ENCODE measurements at regions of chr6 and their contacts with region 1.

Region 1: DNA sequence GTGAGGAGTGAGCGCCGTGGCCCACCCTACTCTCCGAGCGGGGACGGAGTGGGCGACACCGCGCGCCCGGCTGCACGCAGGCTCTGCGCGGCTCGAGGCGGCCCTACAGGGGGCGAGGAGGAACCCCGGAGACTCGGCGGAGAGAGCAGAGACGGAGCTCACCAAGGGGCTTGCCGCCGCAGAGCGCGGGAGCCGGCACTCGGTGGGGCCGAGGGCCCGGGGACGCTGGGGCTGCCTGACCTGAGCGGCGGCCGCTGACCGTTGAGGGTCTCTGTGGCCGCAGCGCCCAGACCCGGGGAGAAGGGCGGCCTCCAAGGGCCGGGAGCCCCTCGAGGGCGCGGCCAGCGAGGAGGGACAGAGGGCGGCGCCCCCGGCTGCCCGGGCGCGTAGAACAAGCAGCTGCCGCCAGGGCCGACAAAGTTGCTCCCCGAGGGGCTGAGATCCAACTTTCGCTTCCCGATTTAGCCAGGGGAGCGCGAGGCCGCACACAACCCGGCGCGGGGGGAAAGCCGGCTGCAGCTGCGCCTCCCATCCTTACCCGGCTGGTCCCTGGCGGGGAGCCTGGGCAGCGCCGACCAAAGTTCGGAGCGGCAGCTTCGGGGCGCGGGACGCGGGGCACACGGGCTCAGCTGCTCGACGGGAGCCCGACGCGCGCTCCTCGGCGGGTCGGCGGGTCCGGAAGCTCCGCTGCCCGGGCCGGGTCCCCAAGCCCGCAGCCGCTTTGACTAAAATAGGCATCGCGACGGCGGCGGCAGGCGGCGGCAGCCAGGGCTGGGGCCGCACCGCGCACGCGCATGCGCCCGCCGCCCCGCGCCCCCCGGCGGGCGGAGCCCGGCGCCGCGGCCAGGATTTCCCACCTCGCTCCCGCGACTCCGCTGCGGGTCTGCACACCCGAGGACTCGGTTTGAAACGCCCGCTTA is 43.1 kb downstream of the POPDC3 start:
- DNase-seq: peak; percentile 70 to 91
- ATAC-seq: peak; percentile 70 to 81
- H3K4me3 ChIP-seq: peak overlapping the region; percentile 81 to 86 (median 84)
- H3K27ac ChIP-seq: peak overlapping the region; percentile 95 to 97 (median 96)
- H3K4me1 ChIP-seq: peaks cover 22 to 33% of the 10 kb centered on the region in 2 donors
- H3K27me3 ChIP-seq: no peaks in the 10 kb centered on the region
- CTCF ChIP-seq: peak in 4 of 5 experiments; percentile 31 to 49 (median 40)
- POLR2A ChIP-seq: peak; percentile 85 to 92

Region 2: DNA sequence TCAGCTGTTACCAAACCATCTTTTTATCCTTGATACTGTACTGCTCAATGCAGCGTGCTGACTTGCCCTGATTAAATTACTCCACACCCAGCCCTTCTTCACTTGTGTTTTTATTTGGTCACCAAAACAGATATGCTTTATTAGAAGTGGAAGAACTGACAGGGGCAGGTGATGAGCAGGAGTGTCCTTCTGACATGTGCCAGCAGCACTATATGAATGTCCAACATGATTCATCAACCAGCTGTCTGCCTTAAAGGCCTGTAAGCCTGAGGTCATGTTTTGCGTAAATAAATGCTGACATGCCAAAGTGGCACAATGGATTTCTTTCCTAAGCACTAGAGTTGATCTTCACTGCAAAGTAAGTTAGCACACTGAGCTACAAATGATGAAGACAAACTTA is 27.7 kb after region 1 on chr6:
- in situ Hi-C with region 1: no loop called
- intact Hi-C with region 1: loop called (anchors 2 kb)
- DNase-seq: peak; percentile 88 to 92
- ATAC-seq: peak; percentile 93 to 95
- H3K4me3 ChIP-seq: peak overlapping the region in 3 of 4 donors; percentile 16 to 20 (median 19)
- H3K27ac ChIP-seq: peak overlapping the region; percentile 89 to 93 (median 91)
- H3K4me1 ChIP-seq: peaks cover 73 to 81% of the 10 kb centered on the region in 2 donors
- H3K27me3 ChIP-seq: no peaks in the 10 kb centered on the region
- CTCF ChIP-seq: no peak
- POLR2A ChIP-seq: peak; percentile 18 to 69

Region 3: GRCh38 chr6:105278813-105279212 is 142.1 kb after region 1 on chr6:
- in situ Hi-C with region 1: no loop called
- intact Hi-C with region 1: loop called (anchors 2 kb)
- DNase-seq: peak; percentile 69 to 81
- ATAC-seq: peak; percentile 67 to 71
- H3K4me3 ChIP-seq: peak overlapping the region; percentile 47 to 71 (median 68)
- H3K27ac ChIP-seq: peak overlapping the region; percentile 87 to 98 (median 96)
- H3K4me1 ChIP-seq: peaks cover 52 to 69% of the 10 kb centered on the region in 2 donors
- H3K27me3 ChIP-seq: no peaks in the 10 kb centered on the region
- CTCF ChIP-seq: peak in 1 of 5 experiments; percentile 20
- POLR2A ChIP-seq: peak; percentile 77 to 85

Region 4: GRCh38 chr6:105402939-105403935 is 266.5 kb after region 1 on chr6 and contains the start of gene PREP:
- in situ Hi-C with region 1: no loop called
- intact Hi-C with region 1: loop called (anchors 2 kb)
- DNase-seq: peak; percentile 75 to 80
- ATAC-seq: peak; percentile 86
- H3K4me3 ChIP-seq: peak within 1 kb of the TSS; percentile 63 to 98 (median 90)
- H3K27ac ChIP-seq: peak within 1 kb of the TSS; percentile 84 to 97 (median 88)
- H3K4me1 ChIP-seq: peaks cover 33 to 40% of the 10 kb centered on the region in 2 donors
- H3K27me3 ChIP-seq: no peaks in the 10 kb centered on the region
- CTCF ChIP-seq: peak; percentile 49 to 89 (median 74)
- POLR2A ChIP-seq: peak; percentile 82 to 90
- total RNA-seq, gene PREP: 34.6 to 71.8 (median 51.8) TPM